MCF 10A (cell line): ENCODE measurements at regions of chr6 and their contacts with region 1.

Region 1: DNA sequence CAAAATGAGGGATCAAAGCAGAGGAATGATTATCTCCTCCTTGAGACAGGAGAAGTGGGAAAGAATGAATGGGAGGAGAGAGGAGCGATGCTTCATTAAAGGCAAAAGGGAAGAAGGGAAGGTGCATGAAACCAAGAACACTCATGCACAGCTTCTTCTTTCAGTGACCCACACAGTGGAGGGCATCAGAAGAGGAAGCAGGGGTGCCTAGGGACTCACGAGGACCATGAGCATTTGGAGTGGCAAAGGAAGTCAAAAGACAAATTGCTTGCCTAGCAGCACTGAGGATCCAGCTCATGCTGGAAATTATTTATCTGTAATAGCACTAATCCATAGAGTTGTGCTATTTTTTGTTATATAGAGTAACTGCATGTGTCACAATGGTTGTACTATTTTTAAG is 66.1 kb downstream of the SMLR1 start:
- DNase-seq: no peak
- H3K4me3 Mint-ChIP-seq: no peak overlapping the region
- H3K27ac Mint-ChIP-seq: no peak overlapping the region
- H3K4me1 Mint-ChIP-seq: peaks cover 14% of the 10 kb centered on the region
- H3K27me3 Mint-ChIP-seq: no peaks in the 10 kb centered on the region
- CTCF ChIP-seq: no peak

Region 2: GRCh38 chr6:130776287-130776925 is 116.9 kb before region 1 on chr6:
- CTCF ChIA-PET with region 1: no interaction called
- POLR2A ChIA-PET with region 1: no interaction called
- intact Hi-C with region 1: no loop called
- DNase-seq: no peak
- H3K4me3 Mint-ChIP-seq: no peak overlapping the region
- H3K27ac Mint-ChIP-seq: no peak overlapping the region
- H3K4me1 Mint-ChIP-seq: no peaks in the 10 kb centered on the region
- H3K27me3 Mint-ChIP-seq: peaks cover 7% of the 10 kb centered on the region
- CTCF ChIP-seq: no peak

Region 3: DNA sequence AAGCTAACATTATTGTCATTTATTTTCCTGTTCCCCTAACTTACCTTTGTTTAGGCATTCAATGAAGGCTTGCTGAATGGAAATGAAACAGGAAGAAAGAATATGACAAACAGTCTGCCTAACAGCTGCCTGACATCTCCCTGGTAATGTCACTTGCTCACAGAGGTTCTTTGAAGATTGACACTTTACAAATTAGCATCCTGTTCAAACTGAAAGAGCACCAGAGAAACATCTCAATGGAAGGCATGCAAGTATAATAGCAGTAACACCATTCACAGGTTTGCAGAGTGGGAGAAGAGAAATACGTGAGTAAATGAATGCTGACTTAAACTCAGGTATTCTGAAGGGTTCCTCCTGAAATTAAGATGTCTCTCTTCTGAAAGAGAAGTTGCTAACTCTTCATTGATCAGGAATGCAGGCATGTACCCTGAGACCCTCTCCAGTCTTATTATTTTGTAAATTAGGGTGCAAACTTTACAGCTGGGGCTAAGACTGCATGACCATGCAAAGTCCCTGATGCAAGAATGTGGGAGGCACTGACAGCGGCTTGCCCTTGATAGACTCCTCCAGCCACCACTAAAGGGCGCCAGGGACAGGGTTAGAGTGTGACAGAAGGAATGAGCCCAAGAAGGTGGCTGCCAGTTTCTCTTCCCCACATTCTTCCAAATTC is 67.4 kb before region 1 on chr6:
- CTCF ChIA-PET with region 1: no interaction called
- POLR2A ChIA-PET with region 1: no interaction called
- intact Hi-C with region 1: no loop called
- DNase-seq: no peak
- H3K4me3 Mint-ChIP-seq: no peak overlapping the region
- H3K27ac Mint-ChIP-seq: no peak overlapping the region
- H3K4me1 Mint-ChIP-seq: no peaks in the 10 kb centered on the region
- H3K27me3 Mint-ChIP-seq: peaks cover 11% of the 10 kb centered on the region
- CTCF ChIP-seq: no peak

Region 4: GRCh38 chr6:131063028-131063763 is 169.9 kb after region 1 on chr6 and contains the start of gene EPB41L2:
- CTCF ChIA-PET with region 1: interaction called, 3 read pairs
- POLR2A ChIA-PET with region 1: no interaction called
- intact Hi-C with region 1: loop called (anchors 1 kb)
- DNase-seq: peak; percentile 80
- H3K4me3 Mint-ChIP-seq: peak within 1 kb of the TSS; percentile 84
- H3K27ac Mint-ChIP-seq: peak within 1 kb of the TSS; percentile 69
- H3K4me1 Mint-ChIP-seq: peaks cover 17% of the 10 kb centered on the region
- H3K27me3 Mint-ChIP-seq: no peaks in the 10 kb centered on the region
- CTCF ChIP-seq: no peak
- total RNA-seq, gene EPB41L2: 22.5 and 33.3 TPM in 2 replicates